Activated CD4-positive, alpha-beta T cell treated with anti-CD3 and anti-CD28 coated beads for 36 hours (primary cell): ENCODE measurements at regions of chr15 and their contacts with region 1.

Region 1: DNA sequence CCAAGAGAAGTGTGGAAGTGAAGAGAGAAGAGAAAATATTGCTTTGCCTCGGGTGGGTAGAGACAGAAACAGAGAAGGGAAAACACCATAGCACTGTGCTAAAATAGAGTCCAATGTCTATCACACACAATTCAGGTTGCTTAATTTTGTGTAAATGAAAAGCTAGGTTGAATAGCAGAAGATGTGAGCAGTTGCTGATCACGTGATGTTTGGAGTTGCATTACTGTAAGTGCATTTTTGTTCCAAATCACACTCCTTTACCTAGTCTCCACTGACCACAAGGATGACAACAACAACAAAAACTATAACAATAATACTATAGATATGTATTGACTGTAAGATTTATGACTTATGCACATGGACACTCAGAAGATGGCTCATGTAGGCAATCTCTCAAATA is 683.2 kb downstream of the AGBL1 start:
- DNase-seq: no peak
- ATAC-seq: no peak
- H3K4me3 Mint-ChIP-seq: no peak overlapping the region
- H3K27ac Mint-ChIP-seq: no peak overlapping the region
- H3K4me1 Mint-ChIP-seq: no peaks in the 10 kb centered on the region
- H3K27me3 Mint-ChIP-seq: peaks cover 11% of the 10 kb centered on the region

Region 2: GRCh38 chr15:86773736-86774135 is 10.9 kb after region 1 on chr15:
- CTCF ChIA-PET with region 1: no interaction called
- POLR2A ChIA-PET with region 1: no interaction called
- intact Hi-C with region 1: loop called in 1 of 2 experiments (anchors 1 kb)
- DNase-seq: no peak
- ATAC-seq: no peak
- H3K4me3 Mint-ChIP-seq: no peak overlapping the region
- H3K27ac Mint-ChIP-seq: no peak overlapping the region
- H3K4me1 Mint-ChIP-seq: no peaks in the 10 kb centered on the region
- H3K27me3 Mint-ChIP-seq: no peaks in the 10 kb centered on the region